A673 (cell line): ENCODE measurements at regions of chr11 and their contacts with region 1.

Region 1: DNA sequence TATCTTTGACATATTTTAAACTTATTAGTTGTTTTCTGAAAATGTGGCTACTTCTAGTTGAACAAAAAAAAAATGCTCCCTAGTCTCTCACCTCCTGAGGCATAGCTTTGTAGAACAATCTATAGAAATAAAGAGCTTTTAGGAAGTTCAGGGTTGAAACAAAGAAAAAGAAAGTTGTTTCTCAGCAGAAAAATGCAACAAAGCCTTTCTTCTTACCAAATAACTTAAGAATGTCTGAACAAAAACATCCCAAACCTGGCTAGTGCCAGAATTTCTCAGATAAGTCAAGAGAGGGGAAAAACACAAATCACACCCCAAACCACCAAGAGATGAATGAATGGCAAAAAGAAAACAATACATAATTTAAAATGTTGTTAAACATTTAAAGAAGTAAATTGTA is 114.1 kb downstream of the MAML2 start:
- DNase-seq: no peak
- H3K4me3 ChIP-seq: no peak overlapping the region
- H3K27ac ChIP-seq: peak overlapping the region; percentile 37
- H3K4me1 ChIP-seq: peaks cover 50% of the 10 kb centered on the region
- H3K27me3 ChIP-seq: no peaks in the 10 kb centered on the region
- CTCF ChIP-seq: no peak

Region 2: GRCh38 chr11:96278039-96278897 is 49.4 kb after region 1 on chr11:
- CTCF ChIA-PET with region 1: no interaction called
- POLR2A ChIA-PET with region 1: interaction called, 13 read pairs
- intact Hi-C with region 1: no loop called
- DNase-seq: peak; percentile 86
- H3K4me3 ChIP-seq: no peak overlapping the region
- H3K27ac ChIP-seq: peak overlapping the region; percentile 46
- H3K4me1 ChIP-seq: peaks cover 39% of the 10 kb centered on the region
- H3K27me3 ChIP-seq: no peaks in the 10 kb centered on the region
- CTCF ChIP-seq: no peak